ENCODE measurements at regions of chr20 and their contacts with region 1.

Region 1: GRCh38 chr20:45362804-45363610 is at the start of gene SYS1:
- DNase-seq: peak; percentile 97
- H3K4me3 ChIP-seq: peak within 1 kb of the TSS; percentile 96
- H3K27ac ChIP-seq: peak within 1 kb of the TSS; percentile 97
- H3K27me3 ChIP-seq: no peaks in the 10 kb centered on the region
- CTCF ChIP-seq: peak; percentile 94
- polyA plus RNA-seq, gene SYS1: 25.1 and 33.4 TPM in 2 replicates

Region 2: DNA sequence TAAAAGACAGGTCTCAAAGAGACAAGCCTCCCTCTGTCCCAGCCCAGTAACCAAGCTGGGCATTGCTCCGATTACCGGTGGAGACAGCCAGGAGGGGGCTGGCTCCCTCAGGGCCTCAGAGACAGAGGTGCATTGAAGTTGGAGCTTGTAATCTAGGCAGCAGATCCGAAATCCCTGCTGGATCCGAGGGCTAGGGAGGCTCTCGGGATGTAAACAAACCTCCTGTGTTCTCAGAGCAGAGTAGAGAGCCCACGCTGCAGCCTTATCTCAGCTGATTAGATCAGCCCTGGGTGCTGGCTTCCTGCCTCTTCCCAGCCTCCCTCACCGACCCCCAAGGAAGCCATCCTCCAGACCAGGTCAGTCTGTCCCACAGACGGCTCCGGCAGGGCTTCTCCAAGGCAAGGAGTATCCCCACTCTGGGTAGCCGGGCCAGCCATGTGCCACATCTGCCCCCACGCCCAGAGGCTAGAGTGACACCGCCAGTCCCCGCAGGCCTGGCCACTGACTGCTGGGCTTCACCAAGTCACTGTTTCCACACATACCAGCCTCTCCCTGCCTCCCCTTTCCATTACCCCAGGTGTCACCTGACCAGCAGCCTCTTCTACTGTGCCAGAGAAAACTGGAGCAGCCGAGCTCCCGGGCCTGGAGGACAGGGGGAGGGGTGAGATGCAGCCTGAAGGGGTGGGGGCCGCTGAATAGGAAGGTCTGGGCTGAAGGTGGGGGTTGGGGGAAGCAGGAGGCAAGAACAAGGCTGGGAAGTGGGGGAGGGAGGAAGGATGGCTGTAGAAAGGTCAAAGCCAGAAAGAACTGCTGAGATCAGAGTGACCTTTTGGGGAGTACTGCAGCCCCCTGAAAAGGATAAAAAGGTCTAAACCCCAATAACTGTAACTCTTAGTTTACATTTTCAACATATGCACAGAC is 20.8 kb before region 1 on chr20:
- CTCF ChIA-PET with region 1: interaction called, 14 read pairs
- POLR2A ChIA-PET with region 1: interaction called, 36 read pairs
- DNase-seq: no peak
- H3K4me3 ChIP-seq: peak overlapping the region; percentile 97
- H3K27ac ChIP-seq: peak overlapping the region; percentile 85
- H3K27me3 ChIP-seq: no peaks in the 10 kb centered on the region
- CTCF ChIP-seq: no peak

Region 3: DNA sequence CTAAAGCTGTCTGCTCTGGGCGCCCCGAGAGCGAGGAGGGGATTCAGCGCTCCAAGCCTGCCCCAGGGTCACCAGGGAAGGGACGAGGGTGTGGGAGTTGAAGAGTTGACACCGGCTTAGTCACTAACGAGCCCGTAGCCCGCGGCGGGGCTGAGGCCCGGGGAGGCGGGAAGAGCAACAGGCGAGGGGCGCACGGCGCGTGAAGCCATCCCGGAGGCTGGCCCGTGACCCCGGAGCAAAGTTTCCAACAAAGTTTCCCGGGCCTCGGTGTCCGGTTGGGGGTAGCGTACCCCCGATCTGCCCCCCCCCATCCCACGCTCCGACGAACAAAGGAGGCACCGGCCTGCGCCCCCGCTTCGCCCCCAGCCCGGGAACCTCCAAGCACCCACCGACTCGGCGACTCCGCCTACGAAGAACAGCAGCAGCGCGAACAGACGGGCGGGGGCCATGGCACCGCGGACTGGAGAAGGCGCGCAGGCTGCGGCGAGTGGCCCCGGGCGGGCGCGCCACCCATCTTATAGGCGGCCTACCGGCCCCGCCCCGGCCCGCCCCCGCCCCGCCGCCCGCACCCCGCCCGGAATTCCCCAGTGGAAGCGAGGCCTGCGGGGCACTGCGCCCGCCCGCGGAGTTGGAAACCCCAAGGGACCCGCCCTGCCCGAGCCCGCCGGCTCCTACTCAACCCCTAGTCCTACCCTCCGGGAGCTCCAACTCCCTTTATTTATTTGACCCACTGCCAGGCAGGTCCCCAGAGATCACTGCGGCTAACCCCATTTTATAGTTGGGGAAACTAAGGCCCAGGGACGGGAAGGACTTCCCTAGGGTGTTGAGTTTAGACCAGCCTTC is 14.8 kb before region 1 on chr20 and contains the start of gene SDC4:
- CTCF ChIA-PET with region 1: interaction called, 58 read pairs
- POLR2A ChIA-PET with region 1: interaction called, 36 read pairs
- DNase-seq: no peak
- H3K4me3 ChIP-seq: peak within 1 kb of the TSS; percentile 97
- H3K27ac ChIP-seq: peak within 1 kb of the TSS; percentile 70
- H3K27me3 ChIP-seq: no peaks in the 10 kb centered on the region
- CTCF ChIP-seq: no peak
- polyA plus RNA-seq, gene SDC4: 177 and 204 TPM in 2 replicates

Region 4: GRCh38 chr20:45399018-45399417 is 36.0 kb after region 1 on chr20:
- CTCF ChIA-PET with region 1: no interaction called
- POLR2A ChIA-PET with region 1: no interaction called
- DNase-seq: no peak
- H3K4me3 ChIP-seq: no peak overlapping the region
- H3K27ac ChIP-seq: no peak overlapping the region
- H3K27me3 ChIP-seq: no peaks in the 10 kb centered on the region
- CTCF ChIP-seq: no peak

Region 5: DNA sequence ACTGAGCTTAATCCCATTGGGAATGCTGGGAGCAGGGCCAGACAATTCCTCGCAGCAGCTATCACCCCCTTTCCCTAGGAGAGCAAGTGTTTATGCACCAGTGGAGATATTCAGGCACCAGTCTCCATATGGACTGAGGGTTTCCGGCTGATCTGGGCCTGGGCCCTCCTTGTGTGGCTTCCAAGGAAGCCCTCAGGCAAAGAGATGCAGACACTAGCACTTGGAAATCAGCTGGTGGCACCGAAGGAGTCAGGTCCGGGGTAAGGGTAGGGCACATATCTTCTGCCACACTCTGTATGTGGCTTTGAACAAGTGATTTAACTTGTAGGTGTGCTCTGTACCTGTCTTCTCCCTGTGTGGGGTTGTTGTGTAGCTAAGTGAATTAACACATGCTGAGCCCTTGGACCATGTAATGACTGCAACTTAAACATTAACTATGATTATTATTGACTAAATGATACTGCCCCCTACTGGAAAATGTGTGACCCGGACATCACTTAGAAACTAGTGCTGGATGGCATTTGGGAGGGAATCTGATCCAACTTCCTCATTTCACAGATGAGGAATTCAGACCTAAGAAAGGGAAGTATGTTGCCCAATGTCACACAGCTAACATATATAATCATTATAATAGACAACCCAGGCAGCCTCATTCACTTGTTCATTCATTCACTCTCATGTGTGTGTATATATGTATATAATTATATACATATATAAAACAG is 87.3 kb after region 1 on chr20:
- CTCF ChIA-PET with region 1: interaction called, 11 read pairs
- POLR2A ChIA-PET with region 1: no interaction called
- DNase-seq: no peak
- H3K4me3 ChIP-seq: no peak overlapping the region
- H3K27ac ChIP-seq: no peak overlapping the region
- H3K27me3 ChIP-seq: peaks cover 18% of the 10 kb centered on the region
- CTCF ChIP-seq: peak; percentile 62